ENCODE measurements at regions of chr12 and their contacts with region 1.

Region 1: GRCh38 chr12:1984759-1985158 is 19.5 kb downstream of the DCP1B start:
- DNase-seq: no peak
- ATAC-seq: no peak
- H3K4me3 ChIP-seq: no peak overlapping the region
- H3K27ac ChIP-seq: no peak overlapping the region
- H3K4me1 ChIP-seq: no peaks in the 10 kb centered on the region
- H3K27me3 ChIP-seq: no peaks in the 10 kb centered on the region
- CTCF ChIP-seq: no peak

Region 2: GRCh38 chr12:1740161-1740948 is 244.4 kb before region 1 on chr12:
- intact Hi-C with region 1: loop called in 1 of 2 experiments (anchors 5 kb)
- DNase-seq: no peak
- ATAC-seq: peak; percentile 77 to 93 (median 91)
- H3K4me3 ChIP-seq: no peak overlapping the region
- H3K27ac ChIP-seq: peak overlapping the region; percentile 63
- H3K4me1 ChIP-seq: peaks cover 49% of the 10 kb centered on the region
- H3K27me3 ChIP-seq: no peaks in the 10 kb centered on the region
- CTCF ChIP-seq: no peak

Region 3: GRCh38 chr12:1776170-1776948 is 208.4 kb before region 1 on chr12:
- intact Hi-C with region 1: no loop called
- DNase-seq: no peak
- ATAC-seq: peak; percentile 61 to 73 (median 66)
- H3K4me3 ChIP-seq: no peak overlapping the region
- H3K27ac ChIP-seq: peak overlapping the region; percentile 32
- H3K4me1 ChIP-seq: peaks cover 46% of the 10 kb centered on the region
- H3K27me3 ChIP-seq: no peaks in the 10 kb centered on the region
- CTCF ChIP-seq: no peak